PC-3 (cell line): ENCODE measurements at regions of chr1 and their contacts with region 1.

Region 1: DNA sequence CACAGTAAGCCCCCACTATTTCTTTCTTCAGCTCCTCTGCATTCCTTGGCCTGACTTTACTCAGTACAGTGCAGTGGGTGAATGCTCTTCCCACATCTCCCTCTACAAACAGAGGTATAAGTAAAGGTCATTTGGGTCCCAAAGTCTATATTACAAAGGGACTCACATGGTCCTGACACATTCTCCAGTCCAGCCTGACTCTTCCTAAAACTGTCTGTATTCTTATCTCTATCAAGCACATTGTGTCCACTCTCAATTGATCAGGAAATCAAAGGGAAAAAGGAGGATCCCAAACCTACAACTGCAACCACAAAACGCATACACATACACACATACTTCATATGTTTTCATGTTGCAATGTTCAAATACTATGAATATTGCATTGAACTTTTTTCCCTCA is 49.4 kb downstream of the FRRS1 start:
- DNase-seq: no peak
- ATAC-seq: no peak
- H3K4me3 ChIP-seq: no peak overlapping the region
- H3K27ac ChIP-seq: no peak overlapping the region
- H3K4me1 ChIP-seq: peaks cover 10% of the 10 kb centered on the region
- H3K27me3 ChIP-seq: no peaks in the 10 kb centered on the region
- CTCF ChIP-seq: no peak

Region 2: DNA sequence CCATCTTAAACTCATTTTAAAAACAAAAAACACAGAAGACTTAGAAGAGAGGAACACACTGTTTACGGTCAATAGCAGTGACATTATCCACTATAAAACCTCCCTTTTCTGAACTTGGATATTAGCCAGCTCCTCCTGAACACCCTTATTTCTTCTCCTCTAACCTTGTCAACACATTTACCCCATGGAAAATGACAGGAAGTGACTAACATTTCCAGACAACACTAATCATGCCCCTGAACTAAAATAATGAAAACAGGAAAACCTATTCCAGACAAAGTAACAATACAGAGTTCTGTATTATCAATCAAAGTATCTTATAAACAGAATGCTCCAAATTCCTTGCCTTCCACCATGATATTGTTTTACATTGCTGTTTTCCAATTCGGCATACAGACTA is 25.8 kb before region 1 on chr1:
- CTCF ChIA-PET with region 1: no interaction called
- POLR2A ChIA-PET with region 1: no interaction called
- intact Hi-C with region 1: no loop called
- DNase-seq: no peak
- ATAC-seq: no peak
- H3K4me3 ChIP-seq: no peak overlapping the region
- H3K27ac ChIP-seq: no peak overlapping the region
- H3K4me1 ChIP-seq: 0 out of 2 replicates have a peak, but pooled peaks cover 3% of the 10 kb centered on the region
- H3K27me3 ChIP-seq: no peaks in the 10 kb centered on the region
- CTCF ChIP-seq: no peak

Region 3: GRCh38 chr1:99766378-99766800 is 49.4 kb after region 1 on chr1 and contains the start of gene FRRS1:
- CTCF ChIA-PET with region 1: no interaction called
- POLR2A ChIA-PET with region 1: interaction called, 11 read pairs
- intact Hi-C with region 1: no loop called
- DNase-seq: peak; percentile 94
- ATAC-seq: peak; percentile 89
- H3K4me3 ChIP-seq: peak within 1 kb of the TSS; percentile 77
- H3K27ac ChIP-seq: peak within 1 kb of the TSS; percentile 70
- H3K4me1 ChIP-seq: peaks cover 17% of the 10 kb centered on the region
- H3K27me3 ChIP-seq: no peaks in the 10 kb centered on the region
- CTCF ChIP-seq: no peak
- total RNA-seq, gene FRRS1: 14.5 and 16.3 TPM in 2 replicates